ENCODE measurements at regions of chr3 and their contacts with region 1.

Region 1: DNA sequence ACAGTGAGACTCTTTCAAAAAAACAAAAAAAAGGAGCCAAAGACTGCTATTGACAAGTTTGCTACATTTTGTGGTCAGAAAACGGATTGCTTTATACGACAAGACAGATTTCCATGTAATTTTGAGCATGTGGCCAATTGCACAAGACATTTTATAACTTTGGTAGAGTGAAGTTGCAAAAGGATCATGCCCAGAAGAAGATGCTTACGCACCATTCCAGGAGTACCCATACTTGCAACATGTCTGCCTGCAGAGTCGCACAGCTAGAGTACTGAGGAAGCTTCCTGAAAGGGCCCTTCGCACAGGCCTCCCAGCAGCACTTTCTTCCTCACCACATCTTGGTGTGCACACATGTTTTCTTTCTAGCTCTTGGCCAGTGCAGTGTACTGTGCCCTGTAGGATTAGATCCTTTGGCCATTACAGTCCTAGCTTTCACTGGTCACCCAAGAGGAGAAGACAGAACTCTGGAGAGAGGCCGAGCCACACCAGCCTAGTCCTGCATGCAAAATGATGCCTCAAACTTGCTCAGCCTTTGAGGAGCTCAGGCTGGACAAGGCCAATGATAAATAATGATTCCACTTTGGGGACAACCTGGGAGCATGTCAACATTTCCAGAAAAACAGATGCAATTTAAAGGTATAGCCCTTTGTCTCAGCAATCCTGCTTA is 11.7 kb downstream of the CHDH start:
- DNase-seq: no peak
- H3K4me3 ChIP-seq: no peak overlapping the region
- H3K27me3 ChIP-seq: no peaks in the 10 kb centered on the region
- CTCF ChIP-seq: no peak

Region 2: DNA sequence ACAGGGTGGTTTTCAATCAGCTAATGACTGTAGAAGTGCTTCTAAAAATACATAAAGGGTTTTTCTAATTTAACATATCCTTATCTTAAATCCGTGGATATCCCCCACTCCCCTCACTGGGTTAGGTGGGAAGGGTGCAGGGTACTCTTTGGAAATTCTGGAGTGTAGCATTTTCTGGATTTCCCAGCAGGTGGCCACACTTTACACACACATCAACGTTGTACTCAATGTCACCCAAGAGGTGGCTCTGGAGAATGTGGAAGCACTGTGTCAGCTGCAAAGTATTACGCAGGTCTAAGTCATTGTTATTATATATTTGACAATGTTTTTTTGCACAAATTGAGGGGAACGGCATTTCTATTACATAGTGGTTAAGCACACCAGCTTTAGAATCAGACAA is 157.1 kb before region 1 on chr3:
- CTCF ChIA-PET with region 1: no interaction called
- POLR2A ChIA-PET with region 1: no interaction called
- DNase-seq: no peak
- H3K4me3 ChIP-seq: no peak overlapping the region
- H3K27me3 ChIP-seq: no peaks in the 10 kb centered on the region
- CTCF ChIP-seq: 0 out of 2 replicates have a peak, but pooled peaks have one; percentile 16

Region 3: GRCh38 chr3:53845103-53845880 is 10.7 kb after region 1 on chr3:
- CTCF ChIA-PET with region 1: interaction called, 12 read pairs
- POLR2A ChIA-PET with region 1: no interaction called
- DNase-seq: no peak
- H3K4me3 ChIP-seq: peak overlapping the region; percentile 45
- H3K27me3 ChIP-seq: peaks cover 9% of the 10 kb centered on the region
- CTCF ChIP-seq: peak; percentile 53

Region 4: DNA sequence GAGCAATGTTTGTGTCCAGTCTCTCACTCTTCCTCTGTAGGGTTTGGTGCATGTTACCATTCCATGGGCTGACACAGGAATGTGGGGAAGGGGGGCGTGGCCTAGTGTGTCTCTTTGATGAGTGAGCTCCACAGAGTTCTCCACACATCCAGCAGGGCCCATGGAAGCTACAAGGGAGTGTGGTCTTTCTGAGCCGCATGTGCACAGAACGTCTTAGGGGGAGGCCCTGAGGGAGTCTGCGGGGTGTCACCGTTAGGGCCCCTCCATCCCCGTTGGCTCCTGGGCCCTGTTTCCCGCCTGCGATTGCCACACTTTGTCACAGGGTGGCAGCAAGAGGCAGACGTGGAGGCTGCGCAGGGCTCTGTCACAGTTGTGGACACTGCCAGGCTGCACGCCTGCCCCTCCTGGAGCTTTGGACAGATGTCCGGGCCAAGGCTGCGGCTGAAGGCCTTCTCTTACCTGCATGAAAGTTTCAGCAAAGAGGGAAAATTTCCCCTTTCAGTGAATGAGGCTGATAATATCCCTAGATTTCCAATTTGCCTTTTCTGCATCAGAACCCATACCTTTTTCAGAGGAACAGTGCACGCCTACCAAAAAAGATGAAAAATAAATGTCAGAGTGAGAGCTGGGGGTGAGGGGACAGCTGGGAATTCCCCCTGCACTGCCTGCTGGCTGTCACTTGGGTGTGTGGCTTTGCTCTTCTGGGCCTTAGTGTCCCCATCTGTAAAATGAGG is 312.1 kb after region 1 on chr3:
- CTCF ChIA-PET with region 1: no interaction called
- POLR2A ChIA-PET with region 1: no interaction called
- DNase-seq: no peak
- H3K4me3 ChIP-seq: no peak overlapping the region
- H3K27me3 ChIP-seq: no peaks in the 10 kb centered on the region
- CTCF ChIP-seq: peak; percentile 43

Measured in BJ (cell line).